B cell (primary cell): ENCODE measurements at regions of chr9 and their contacts with region 1.

Region 1: DNA sequence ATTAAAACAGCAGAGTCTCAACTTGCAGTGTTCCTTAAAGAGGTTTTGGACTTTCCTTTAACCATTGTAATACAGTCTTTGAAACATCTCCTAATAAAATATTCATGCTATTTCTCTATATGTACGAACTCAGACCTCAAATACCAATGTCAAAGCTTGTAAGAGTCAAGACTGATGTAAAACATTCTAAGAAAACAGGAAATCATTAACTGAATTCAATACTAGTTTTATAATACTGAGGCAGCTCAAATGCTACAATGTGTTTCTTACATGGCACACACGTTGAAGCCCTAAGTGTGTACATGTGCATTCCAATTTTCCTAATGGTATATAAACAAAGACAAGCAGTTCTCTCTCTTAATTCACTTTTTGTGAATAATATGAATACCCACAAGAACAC is 11.6 kb downstream of the PSIP1 start:
- DNase-seq: no peak
- ATAC-seq: no peak
- H3K4me3 ChIP-seq: no peak overlapping the region
- H3K4me3 Mint-ChIP-seq: no peak overlapping the region
- H3K27ac ChIP-seq: no peak overlapping the region
- H3K27ac Mint-ChIP-seq: no peak overlapping the region
- H3K4me1 ChIP-seq: no peaks in the 10 kb centered on the region
- H3K4me1 Mint-ChIP-seq: peaks cover 31% of the 10 kb centered on the region
- H3K27me3 ChIP-seq: no peaks in the 10 kb centered on the region
- H3K27me3 Mint-ChIP-seq: no peaks in the 10 kb centered on the region
- CTCF ChIP-seq: no peak

Region 2: DNA sequence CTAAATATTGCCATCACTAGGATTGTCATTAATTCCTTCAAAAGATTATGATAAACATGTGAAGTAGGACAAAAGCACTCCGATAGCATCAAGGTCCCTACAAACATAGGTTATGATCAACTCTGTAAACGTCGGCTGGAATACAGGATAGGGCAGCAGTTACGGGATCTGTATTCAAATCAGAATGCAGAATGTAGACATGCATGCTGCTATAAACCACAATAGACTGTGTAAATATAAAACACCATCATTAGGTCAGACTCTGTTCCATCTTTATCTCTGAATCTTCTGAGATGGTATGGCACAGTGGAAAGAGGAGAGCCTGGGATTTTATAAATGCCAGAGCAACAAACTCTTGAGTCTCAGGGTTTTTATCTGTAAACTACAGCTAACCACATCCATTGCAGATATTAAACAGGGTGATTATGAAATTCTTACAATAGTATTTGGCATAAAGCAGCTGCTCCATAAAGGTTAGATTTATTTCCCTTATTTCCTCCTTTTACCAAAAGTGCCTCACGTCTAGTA is 914.6 kb before region 1 on chr9:
- CTCF ChIA-PET with region 1: no interaction called
- POLR2A ChIA-PET with region 1: no interaction called
- intact Hi-C with region 1: no loop called
- DNase-seq: no peak
- ATAC-seq: no peak
- H3K4me3 ChIP-seq: no peak overlapping the region
- H3K4me3 Mint-ChIP-seq: no peak overlapping the region
- H3K27ac ChIP-seq: no peak overlapping the region
- H3K27ac Mint-ChIP-seq: no peak overlapping the region
- H3K4me1 ChIP-seq: peaks cover 6% of the 10 kb centered on the region in 2 donors
- H3K4me1 Mint-ChIP-seq: peaks cover 14% of the 10 kb centered on the region
- H3K27me3 ChIP-seq: no peaks in the 10 kb centered on the region
- H3K27me3 Mint-ChIP-seq: no peaks in the 10 kb centered on the region
- CTCF ChIP-seq: no peak

Region 3: DNA sequence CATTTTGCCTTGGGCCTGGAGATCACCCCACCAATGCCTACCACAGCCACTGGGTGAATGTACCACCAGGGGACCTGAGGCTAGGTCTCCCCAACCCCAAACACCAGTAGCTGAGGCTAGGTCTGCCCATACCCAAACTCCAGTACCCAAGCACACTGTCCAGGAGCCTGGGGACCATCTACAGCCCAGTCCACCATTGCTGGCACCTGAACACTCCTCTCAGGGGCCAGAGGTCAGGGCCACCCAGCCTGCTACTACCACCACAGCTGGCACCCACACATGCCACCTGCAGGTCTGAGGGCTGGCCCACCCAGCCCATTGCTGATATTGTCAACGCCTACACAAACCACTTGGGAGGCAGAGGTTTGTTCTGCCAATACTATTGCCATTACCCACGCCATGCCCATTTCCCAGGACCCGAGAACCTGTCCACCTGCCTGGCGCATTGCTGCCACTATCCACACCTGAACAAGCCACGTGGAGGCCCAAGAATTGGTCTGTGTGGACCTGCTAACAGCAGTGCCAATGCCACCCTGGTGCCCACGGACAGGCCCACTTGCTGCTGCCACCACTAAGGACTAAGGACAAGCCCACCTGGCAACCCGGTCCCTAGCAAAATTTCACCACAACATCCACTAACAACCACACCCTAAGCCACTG is 865.1 kb before region 1 on chr9:
- CTCF ChIA-PET with region 1: no interaction called
- POLR2A ChIA-PET with region 1: no interaction called
- intact Hi-C with region 1: no loop called
- DNase-seq: no peak
- ATAC-seq: no peak
- H3K4me3 ChIP-seq: no peak overlapping the region
- H3K4me3 Mint-ChIP-seq: no peak overlapping the region
- H3K27ac ChIP-seq: no peak overlapping the region
- H3K27ac Mint-ChIP-seq: no peak overlapping the region
- H3K4me1 ChIP-seq: no peaks in the 10 kb centered on the region
- H3K4me1 Mint-ChIP-seq: peaks cover 11% of the 10 kb centered on the region
- H3K27me3 ChIP-seq: no peaks in the 10 kb centered on the region
- H3K27me3 Mint-ChIP-seq: no peaks in the 10 kb centered on the region
- CTCF ChIP-seq: no peak

Region 4: DNA sequence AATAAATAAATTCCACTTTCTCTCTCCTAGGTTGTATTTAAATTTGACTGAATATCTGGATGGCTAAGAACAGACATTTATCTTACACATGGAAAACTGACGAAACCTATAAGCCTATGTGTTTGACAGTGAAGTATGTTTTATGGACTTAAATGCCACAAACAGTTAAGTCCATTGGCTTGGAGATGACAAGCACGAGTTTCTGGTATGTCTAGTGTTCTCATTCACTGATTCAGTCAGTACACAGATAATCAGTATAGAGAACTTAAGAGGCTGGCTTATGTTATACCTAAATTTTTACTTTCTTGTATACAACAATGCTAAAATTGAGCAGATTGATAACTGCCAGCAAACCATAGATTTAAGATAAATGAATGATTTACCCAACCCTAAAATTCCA is 37.5 kb before region 1 on chr9:
- CTCF ChIA-PET with region 1: no interaction called
- POLR2A ChIA-PET with region 1: no interaction called
- intact Hi-C with region 1: loop called (anchors 5 kb)
- DNase-seq: no peak
- ATAC-seq: no peak
- H3K4me3 ChIP-seq: no peak overlapping the region
- H3K4me3 Mint-ChIP-seq: no peak overlapping the region
- H3K27ac ChIP-seq: no peak overlapping the region
- H3K27ac Mint-ChIP-seq: no peak overlapping the region
- H3K4me1 ChIP-seq: no peaks in the 10 kb centered on the region
- H3K4me1 Mint-ChIP-seq: no peaks in the 10 kb centered on the region
- H3K27me3 ChIP-seq: no peaks in the 10 kb centered on the region
- H3K27me3 Mint-ChIP-seq: no peaks in the 10 kb centered on the region
- CTCF ChIP-seq: no peak